ENCODE measurements at regions of chr5 and their contacts with region 1.

Region 1: GRCh38 chr5:74231697-74232096 is 408.8 kb downstream of the ENC1 start:
- DNase-seq: no peak
- H3K4me3 ChIP-seq: no peak overlapping the region
- H3K27ac ChIP-seq: no peak overlapping the region
- H3K4me1 ChIP-seq: no peaks in the 10 kb centered on the region
- H3K27me3 ChIP-seq: peaks cover 2 to 12% of the 10 kb centered on the region in 2 experiments
- CTCF ChIP-seq: no peak
- POLR2A ChIP-seq: no peak

Region 2: GRCh38 chr5:74182603-74183002 is 49.1 kb before region 1 on chr5:
- CTCF ChIA-PET with region 1: no interaction called
- POLR2A ChIA-PET with region 1: interaction called, 10 read pairs
- dilution Hi-C with region 1: no loop called
- intact Hi-C with region 1: no loop called
- DNase-seq: no peak
- H3K4me3 ChIP-seq: no peak overlapping the region
- H3K27ac ChIP-seq: no peak overlapping the region
- H3K4me1 ChIP-seq: no peaks in the 10 kb centered on the region
- H3K27me3 ChIP-seq: peaks cover 0 to 5% of the 10 kb centered on the region in 2 experiments
- CTCF ChIP-seq: no peak
- POLR2A ChIP-seq: no peak

Region 3: GRCh38 chr5:74205767-74206570 is 25.7 kb before region 1 on chr5:
- CTCF ChIA-PET with region 1: no interaction called
- POLR2A ChIA-PET with region 1: no interaction called
- dilution Hi-C with region 1: no loop called
- intact Hi-C with region 1: no loop called
- DNase-seq: no peak
- H3K4me3 ChIP-seq: no peak overlapping the region
- H3K27ac ChIP-seq: no peak overlapping the region
- H3K4me1 ChIP-seq: peaks cover 19% of the 10 kb centered on the region
- H3K27me3 ChIP-seq: peaks cover 0 to 5% of the 10 kb centered on the region in 2 experiments
- CTCF ChIP-seq: no peak
- POLR2A ChIP-seq: no peak

Region 4: GRCh38 chr5:74243634-74244033 is 11.9 kb after region 1 on chr5:
- CTCF ChIA-PET with region 1: interaction called, 3 read pairs
- POLR2A ChIA-PET with region 1: no interaction called
- dilution Hi-C with region 1: no loop called
- intact Hi-C with region 1: loop called (anchors 2 kb)
- DNase-seq: peak; percentile 61
- H3K4me3 ChIP-seq: no peak overlapping the region
- H3K27ac ChIP-seq: no peak overlapping the region
- H3K4me1 ChIP-seq: peaks cover 8% of the 10 kb centered on the region
- H3K27me3 ChIP-seq: peaks cover 4 to 8% of the 10 kb centered on the region in 2 experiments
- CTCF ChIP-seq: no peak
- POLR2A ChIP-seq: no peak